WTC11 (cell line): ENCODE measurements at regions of chr14 and their contacts with region 1.

Region 1: DNA sequence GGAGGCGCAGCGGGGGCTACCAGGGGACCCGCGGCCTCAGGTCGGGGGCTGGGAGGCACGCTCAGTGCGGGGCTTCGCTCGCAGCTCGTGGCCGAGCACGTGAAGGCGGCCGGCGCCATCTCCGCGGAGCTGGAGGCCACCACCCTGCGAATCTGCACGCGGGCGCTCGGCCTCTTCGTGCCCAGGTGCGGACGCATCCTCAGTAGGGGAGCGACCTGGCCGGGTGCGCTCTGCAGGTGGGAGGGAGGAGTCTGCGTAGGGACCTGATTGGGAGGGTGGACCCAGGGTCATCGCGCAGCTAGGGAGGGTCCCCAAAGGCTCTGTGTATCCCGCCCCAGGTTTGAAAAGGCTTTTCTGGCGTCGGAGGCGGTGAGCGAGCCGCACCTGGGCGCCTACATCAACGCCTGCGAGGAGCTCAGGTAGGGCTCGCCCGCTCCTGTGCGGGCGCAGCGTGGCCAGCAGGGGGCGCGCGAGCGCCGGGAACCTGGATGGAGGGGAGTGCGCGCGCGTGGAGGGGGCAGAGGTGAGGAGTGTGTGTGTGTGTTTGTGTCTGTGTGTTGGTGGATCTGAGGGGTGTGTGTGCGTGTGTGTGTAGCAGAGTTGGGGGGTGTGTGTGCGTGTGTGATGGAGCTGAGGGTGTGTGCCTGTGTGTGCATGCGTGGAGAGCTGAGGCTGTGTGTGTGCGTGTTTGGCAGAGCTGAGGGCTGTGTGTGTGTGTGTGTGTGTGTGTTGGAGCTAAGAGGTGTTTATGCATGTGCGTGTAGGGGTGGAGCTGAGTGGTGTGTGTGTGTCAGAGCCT is 10.3 kb downstream of the EXOC3L4 start:
- DNase-seq: peak; percentile 85
- ATAC-seq: peak; percentile 75
- H3K4me3 Mint-ChIP-seq: peak overlapping the region; percentile 30
- H3K27ac Mint-ChIP-seq: no peak overlapping the region
- H3K4me1 Mint-ChIP-seq: peaks cover 26% of the 10 kb centered on the region
- H3K27me3 Mint-ChIP-seq: peaks cover 54% of the 10 kb centered on the region
- CTCF ChIP-seq: peak; percentile 98

Region 2: GRCh38 chr14:103078093-103078749 is 26.6 kb before region 1 on chr14:
- CTCF ChIA-PET with region 1: interaction called, 74 read pairs
- POLR2A ChIA-PET with region 1: no interaction called
- DNase-seq: peak; percentile 77
- ATAC-seq: peak; percentile 78
- H3K4me3 Mint-ChIP-seq: no peak overlapping the region
- H3K27ac Mint-ChIP-seq: no peak overlapping the region
- H3K4me1 Mint-ChIP-seq: no peaks in the 10 kb centered on the region
- H3K27me3 Mint-ChIP-seq: peaks cover 5% of the 10 kb centered on the region
- CTCF ChIP-seq: peak; percentile 68; the same call in 1 of the 2 replicates

Region 3: GRCh38 chr14:103115883-103116572 is 11.2 kb after region 1 on chr14:
- CTCF ChIA-PET with region 1: interaction called, 27 read pairs
- POLR2A ChIA-PET with region 1: no interaction called
- DNase-seq: no peak
- ATAC-seq: no peak
- H3K4me3 Mint-ChIP-seq: no peak overlapping the region
- H3K27ac Mint-ChIP-seq: no peak overlapping the region
- H3K4me1 Mint-ChIP-seq: peaks cover 10% of the 10 kb centered on the region
- H3K27me3 Mint-ChIP-seq: peaks cover 2% of the 10 kb centered on the region; the same call in 1 of the 2 replicates
- CTCF ChIP-seq: no peak

Region 4: GRCh38 chr14:103156651-103157378 is 52.0 kb after region 1 on chr14:
- CTCF ChIA-PET with region 1: interaction called, 22 read pairs
- POLR2A ChIA-PET with region 1: no interaction called
- DNase-seq: peak; percentile 24
- ATAC-seq: peak; percentile 71
- H3K4me3 Mint-ChIP-seq: no peak overlapping the region
- H3K27ac Mint-ChIP-seq: 0 out of 2 replicates have a peak overlapping the region, but pooled peaks have one; percentile 45
- H3K4me1 Mint-ChIP-seq: 0 out of 2 replicates have a peak, but pooled peaks cover 6% of the 10 kb centered on the region
- H3K27me3 Mint-ChIP-seq: no peaks in the 10 kb centered on the region
- CTCF ChIP-seq: no peak

Region 5: GRCh38 chr14:103216399-103216798 is 111.5 kb after region 1 on chr14:
- CTCF ChIA-PET with region 1: interaction called, 16 read pairs
- POLR2A ChIA-PET with region 1: no interaction called
- DNase-seq: no peak
- ATAC-seq: no peak
- H3K4me3 Mint-ChIP-seq: no peak overlapping the region
- H3K27ac Mint-ChIP-seq: no peak overlapping the region
- H3K4me1 Mint-ChIP-seq: peaks cover 5% of the 10 kb centered on the region
- H3K27me3 Mint-ChIP-seq: peaks cover 28% of the 10 kb centered on the region
- CTCF ChIP-seq: no peak

Region 6: DNA sequence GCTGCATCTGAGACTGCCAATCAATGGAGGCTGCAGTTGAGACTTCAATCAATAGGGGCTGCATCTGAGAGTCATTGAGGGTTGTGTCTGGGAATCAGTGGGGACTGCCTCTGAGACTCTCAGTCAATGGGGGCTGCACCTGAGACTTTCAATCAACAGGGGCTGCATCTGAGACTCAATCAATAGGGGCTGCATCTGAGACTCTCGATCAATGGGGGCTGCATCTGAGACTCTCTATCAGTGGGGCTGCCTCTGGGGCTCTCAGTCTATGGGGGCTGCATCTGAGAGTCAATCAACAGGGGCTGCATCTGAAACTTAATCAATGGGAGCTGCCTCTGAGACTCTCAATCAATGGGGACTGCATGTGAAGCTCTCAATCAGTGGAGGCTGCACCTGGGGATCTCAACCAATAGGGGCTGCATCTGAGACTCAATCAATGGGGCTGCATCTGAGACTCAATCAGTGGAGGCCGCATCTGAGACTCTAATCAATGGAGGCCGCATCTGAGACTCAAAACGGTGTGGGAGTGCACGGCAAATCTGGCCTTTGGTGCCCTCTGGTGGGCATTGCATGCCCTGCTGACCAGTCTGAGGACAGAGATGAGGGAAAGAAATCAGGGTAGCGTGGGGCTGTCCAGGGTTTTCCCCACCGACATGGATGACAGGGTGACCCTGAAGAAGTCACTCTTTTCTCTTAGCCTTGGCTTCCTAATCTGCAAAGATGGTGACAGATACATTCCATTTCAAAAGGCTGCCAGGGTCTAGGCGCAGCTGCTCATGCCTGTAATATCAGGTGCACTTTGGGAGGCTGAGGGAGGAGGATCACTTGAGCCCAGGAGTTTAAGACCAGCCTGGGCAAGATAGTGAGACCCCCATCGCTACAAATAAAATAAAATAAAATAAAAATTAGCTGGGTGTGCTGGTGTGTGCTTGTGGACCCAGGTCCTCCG is 187.8 kb after region 1 on chr14:
- CTCF ChIA-PET with region 1: interaction called, 60 read pairs
- POLR2A ChIA-PET with region 1: no interaction called
- DNase-seq: peak; percentile 85
- ATAC-seq: peak; percentile 88
- H3K4me3 Mint-ChIP-seq: no peak overlapping the region
- H3K27ac Mint-ChIP-seq: no peak overlapping the region
- H3K4me1 Mint-ChIP-seq: no peaks in the 10 kb centered on the region
- H3K27me3 Mint-ChIP-seq: peaks cover 9% of the 10 kb centered on the region; the same call in 1 of the 2 replicates
- CTCF ChIP-seq: peak; percentile 81